ENCODE measurements at regions of chr9 and their contacts with region 1.

Region 1: GRCh38 chr9:32571969-32572899 is 725 bp downstream of the NDUFB6 start:
- DNase-seq: peak in 1 of 2 donors; percentile 81
- H3K4me3 ChIP-seq: peak overlapping the region; percentile 66 to 93
- H3K27ac ChIP-seq: peak overlapping the region; percentile 82 to 91
- H3K4me1 ChIP-seq: peaks cover 0 to 12% of the 10 kb centered on the region in 2 donors
- H3K27me3 ChIP-seq: no peaks in the 10 kb centered on the region
- CTCF ChIP-seq: peak; percentile 32 to 53 (median 34)

Region 2: DNA sequence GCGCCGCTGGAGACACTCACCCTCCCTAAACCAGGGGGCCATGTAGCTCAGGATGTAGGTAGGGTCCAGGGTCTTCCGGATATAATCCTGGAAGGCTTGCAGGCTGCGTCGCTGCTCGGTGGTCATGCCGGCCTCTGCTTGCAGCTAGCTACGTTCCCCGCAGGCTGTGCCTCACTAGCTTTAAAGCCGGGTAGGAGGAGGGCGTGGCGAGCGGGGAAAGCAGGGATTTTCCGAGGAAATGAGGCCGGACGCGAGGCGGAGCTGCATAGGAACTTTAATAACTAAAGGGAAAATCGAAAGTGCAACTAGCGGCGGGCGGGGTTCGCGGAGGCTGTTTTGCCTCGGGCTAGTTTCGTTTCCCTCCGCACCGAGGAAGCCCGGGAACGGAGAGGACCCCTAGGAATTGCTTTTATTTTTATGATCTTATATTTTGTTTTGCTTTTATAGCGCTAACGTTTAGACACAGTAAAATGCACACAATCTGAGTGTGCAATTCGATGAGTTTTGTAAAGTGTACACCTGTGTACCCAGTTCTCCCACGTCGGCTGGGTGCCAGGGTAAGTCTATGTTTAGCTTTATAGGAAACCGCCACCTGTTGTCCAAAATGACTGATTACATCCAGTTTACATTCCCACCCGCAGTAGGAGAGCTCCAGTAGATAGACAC is 46.1 kb before region 1 on chr9 and contains the start of gene RIGI:
- intact Hi-C with region 1: loop called (anchors 2 kb)
- DNase-seq: peak; percentile 72 to 97
- H3K4me3 ChIP-seq: peak within 1 kb of the TSS; percentile 71 to 78
- H3K27ac ChIP-seq: peak within 1 kb of the TSS; percentile 78 to 79
- H3K4me1 ChIP-seq: peaks cover 7 to 17% of the 10 kb centered on the region in 2 donors
- H3K27me3 ChIP-seq: no peaks in the 10 kb centered on the region
- CTCF ChIP-seq: peak; percentile 16 to 35 (median 29)
- total RNA-seq, gene RIGI: 1.9 TPM